ENCODE measurements at regions of chr15 and their contacts with region 1.

Region 1: DNA sequence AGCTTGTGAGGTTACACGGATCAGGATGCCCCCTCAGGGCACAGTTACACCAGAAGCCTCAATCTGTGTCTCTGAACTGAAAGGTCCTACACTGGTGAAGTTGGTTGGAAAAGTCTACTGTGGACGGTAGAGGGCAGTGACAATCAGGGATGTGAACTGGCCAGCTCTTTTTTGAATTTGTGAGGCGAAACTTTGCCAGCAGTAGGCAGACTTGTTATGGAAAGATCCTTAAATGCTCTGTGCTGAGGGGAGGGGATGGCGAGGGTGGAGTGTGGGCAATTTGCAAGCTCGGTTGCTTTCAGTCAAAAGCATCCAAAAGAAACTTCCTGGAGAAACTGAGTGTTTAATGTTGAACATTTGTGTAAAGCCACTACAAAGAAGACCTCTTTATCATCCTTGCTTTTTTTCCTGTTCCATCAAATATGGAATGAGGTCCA is 127.4 kb upstream of the ABHD17C start:
- DNase-seq: peak; percentile 84 to 89
- ATAC-seq: peak; percentile 89 to 97
- H3K4me3 ChIP-seq: no peak overlapping the region
- H3K27ac ChIP-seq: no peak overlapping the region
- H3K4me1 ChIP-seq: no peaks in the 10 kb centered on the region
- CTCF ChIP-seq: peak; percentile 99
- EP300 ChIP-seq: no peak
- POLR2A ChIP-seq: no peak
- RAD21 ChIP-seq: peak; percentile 98

Region 2: DNA sequence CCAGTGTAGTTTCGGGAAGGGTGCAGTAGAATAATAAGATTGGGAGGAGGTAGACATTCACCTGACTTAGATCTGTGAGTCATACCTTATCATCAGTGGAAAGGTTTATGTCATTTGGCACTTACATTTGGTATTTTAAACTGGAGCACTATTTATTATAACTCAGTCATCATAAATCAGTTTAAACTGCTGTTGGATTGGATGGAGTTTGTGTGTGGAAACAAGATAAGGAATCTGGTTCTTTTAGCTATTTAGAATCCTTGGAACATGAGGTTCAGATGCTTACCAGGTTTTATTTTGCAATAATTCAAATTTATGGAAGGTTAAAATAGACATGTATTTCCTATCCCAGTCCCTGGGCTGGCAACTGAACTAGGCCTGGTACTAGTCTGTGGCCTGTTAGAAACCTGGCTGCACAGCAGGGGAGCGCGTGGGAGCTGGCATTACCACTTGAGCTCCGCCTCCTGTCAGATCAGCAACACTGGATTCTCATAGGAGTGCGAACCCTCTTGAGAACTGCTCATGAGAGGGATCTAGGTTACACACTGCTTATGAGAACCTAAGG is 473.8 kb before region 1 on chr15:
- CTCF ChIA-PET with region 1: no interaction called
- POLR2A ChIA-PET with region 1: no interaction called
- DNase-seq: peak in 1 of 2 experiments; percentile 46
- ATAC-seq: peak; percentile 72 to 76; a peak in 5 of 6 replicates
- H3K4me3 ChIP-seq: no peak overlapping the region
- H3K27ac ChIP-seq: no peak overlapping the region
- H3K4me1 ChIP-seq: peaks cover 27% of the 10 kb centered on the region
- CTCF ChIP-seq: no peak
- EP300 ChIP-seq: no peak
- POLR2A ChIP-seq: no peak
- RAD21 ChIP-seq: no peak

Region 3: GRCh38 chr15:80455668-80456442 is 111.9 kb before region 1 on chr15:
- CTCF ChIA-PET with region 1: interaction called, 77 read pairs
- POLR2A ChIA-PET with region 1: no interaction called
- DNase-seq: peak; percentile 78 to 83
- ATAC-seq: peak; percentile 79 to 92
- H3K4me3 ChIP-seq: no peak overlapping the region
- H3K27ac ChIP-seq: no peak overlapping the region
- H3K4me1 ChIP-seq: peaks cover 14% of the 10 kb centered on the region
- CTCF ChIP-seq: peak; percentile 99
- EP300 ChIP-seq: no peak
- POLR2A ChIP-seq: no peak
- RAD21 ChIP-seq: peak; percentile 98 to 99

Region 4: DNA sequence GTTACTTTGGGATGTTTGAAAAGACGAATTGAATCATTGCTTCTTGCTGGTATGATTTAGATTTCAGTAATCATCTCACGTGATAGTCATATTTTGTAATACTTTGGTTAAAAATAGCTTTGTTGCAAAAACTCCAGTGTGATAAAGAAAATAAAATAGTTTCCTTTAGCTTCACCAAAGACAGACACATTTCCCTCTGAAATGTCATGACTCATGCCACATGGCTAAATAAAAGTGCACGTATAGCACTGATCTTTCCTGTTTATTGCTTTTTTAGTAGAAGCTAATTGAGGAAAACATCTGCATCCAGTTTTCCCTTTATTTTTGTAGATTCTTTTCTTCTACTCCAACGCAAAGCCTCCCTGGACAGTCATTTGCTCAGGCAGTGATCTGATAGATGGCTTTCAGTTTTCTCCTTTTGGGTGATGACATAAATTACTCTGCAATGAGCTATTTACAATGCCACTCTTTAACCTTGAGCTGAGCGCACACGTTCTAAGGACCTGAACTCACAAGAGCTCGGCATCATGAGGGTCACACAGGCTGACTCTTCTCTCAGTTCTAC is 78.6 kb before region 1 on chr15:
- CTCF ChIA-PET with region 1: interaction called, 27 read pairs
- POLR2A ChIA-PET with region 1: no interaction called
- DNase-seq: no peak
- ATAC-seq: no peak
- H3K4me3 ChIP-seq: no peak overlapping the region
- H3K27ac ChIP-seq: peak overlapping the region in 1 of 2 experiments; percentile 27; a peak in 3 of 6 replicates
- H3K4me1 ChIP-seq: peaks cover 36% of the 10 kb centered on the region
- CTCF ChIP-seq: no peak
- EP300 ChIP-seq: no peak
- POLR2A ChIP-seq: no peak
- RAD21 ChIP-seq: no peak

Region 5: DNA sequence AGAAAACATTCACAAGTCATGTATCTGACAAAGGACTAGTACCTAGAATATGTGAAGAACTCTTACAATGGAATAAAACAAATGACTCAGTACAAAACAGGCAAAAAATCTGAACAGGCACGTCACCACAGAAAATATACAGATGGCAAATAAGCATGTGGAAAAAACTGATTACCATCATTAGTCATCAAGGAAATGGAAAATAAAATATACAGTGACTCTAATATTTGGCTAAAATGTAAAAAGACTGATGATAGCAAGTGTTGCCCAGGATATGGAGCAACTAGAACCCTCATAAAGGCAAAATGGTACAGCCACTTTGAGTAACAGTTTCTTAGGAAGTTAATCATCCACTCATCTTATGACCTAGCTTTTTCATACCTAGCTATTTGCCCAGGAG is 31.6 kb after region 1 on chr15:
- CTCF ChIA-PET with region 1: interaction called, 41 read pairs
- POLR2A ChIA-PET with region 1: no interaction called
- DNase-seq: peak in 1 of 2 experiments; percentile 70
- ATAC-seq: peak; percentile 20 to 54; a peak in 1 of 6 replicates
- H3K4me3 ChIP-seq: no peak overlapping the region
- H3K27ac ChIP-seq: peak overlapping the region in 1 of 2 experiments; percentile 12; a peak in 1 of 6 replicates
- H3K4me1 ChIP-seq: peaks cover 28% of the 10 kb centered on the region
- CTCF ChIP-seq: no peak
- EP300 ChIP-seq: no peak; a peak in 1 of 5 replicates
- POLR2A ChIP-seq: no peak
- RAD21 ChIP-seq: no peak

Region 6: DNA sequence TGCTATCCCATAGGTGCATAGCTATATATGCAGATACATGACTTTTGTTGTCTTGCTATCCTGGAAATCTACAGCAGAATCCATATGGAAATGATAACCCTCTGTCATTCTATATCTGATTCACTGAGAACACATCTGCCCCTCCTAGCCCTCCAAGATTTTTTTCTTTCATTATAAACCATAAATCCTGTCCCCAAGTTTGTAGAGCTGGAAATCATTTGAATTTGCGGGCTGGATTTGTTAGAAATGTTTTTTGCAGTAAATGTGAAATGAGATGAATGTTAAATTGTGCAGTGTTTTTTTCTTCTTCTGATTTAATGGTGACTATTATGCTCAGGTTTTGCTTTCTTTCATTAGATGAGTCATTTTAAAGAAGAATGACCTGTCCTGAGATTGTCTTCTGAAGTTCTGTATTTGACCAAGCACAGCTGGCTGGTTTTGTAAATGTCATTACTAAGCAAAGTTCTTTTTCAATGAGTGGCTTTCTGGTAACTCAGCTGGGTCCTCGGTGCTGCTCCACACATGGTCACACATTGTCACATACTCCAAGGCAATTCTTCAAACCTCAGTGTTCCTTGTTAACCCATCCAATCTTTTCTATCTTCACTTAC is 102.0 kb after region 1 on chr15:
- CTCF ChIA-PET with region 1: interaction called, 31 read pairs
- POLR2A ChIA-PET with region 1: no interaction called
- DNase-seq: no peak
- ATAC-seq: no peak
- H3K4me3 ChIP-seq: no peak overlapping the region
- H3K27ac ChIP-seq: no peak overlapping the region
- H3K4me1 ChIP-seq: peaks cover 9% of the 10 kb centered on the region; the same call in 2 of the 3 replicates
- CTCF ChIP-seq: no peak
- EP300 ChIP-seq: no peak
- POLR2A ChIP-seq: no peak
- RAD21 ChIP-seq: no peak

Region 7: GRCh38 chr15:80752174-80752573 is 184.4 kb after region 1 on chr15:
- CTCF ChIA-PET with region 1: interaction called, 13 read pairs
- POLR2A ChIA-PET with region 1: no interaction called
- DNase-seq: no peak
- ATAC-seq: no peak
- H3K4me3 ChIP-seq: no peak overlapping the region
- H3K27ac ChIP-seq: no peak overlapping the region
- H3K4me1 ChIP-seq: peaks cover 13% of the 10 kb centered on the region
- CTCF ChIP-seq: no peak
- EP300 ChIP-seq: no peak
- POLR2A ChIP-seq: no peak
- RAD21 ChIP-seq: no peak

Region 8: GRCh38 chr15:80789296-80789695 is 221.6 kb after region 1 on chr15:
- CTCF ChIA-PET with region 1: interaction called, 24 read pairs
- POLR2A ChIA-PET with region 1: no interaction called
- DNase-seq: no peak
- ATAC-seq: no peak
- H3K4me3 ChIP-seq: no peak overlapping the region
- H3K27ac ChIP-seq: no peak overlapping the region
- H3K4me1 ChIP-seq: no peaks in the 10 kb centered on the region
- CTCF ChIP-seq: no peak
- EP300 ChIP-seq: no peak
- POLR2A ChIP-seq: no peak
- RAD21 ChIP-seq: no peak